ENCODE measurements at regions of chr17 and their contacts with region 1.

Region 1: DNA sequence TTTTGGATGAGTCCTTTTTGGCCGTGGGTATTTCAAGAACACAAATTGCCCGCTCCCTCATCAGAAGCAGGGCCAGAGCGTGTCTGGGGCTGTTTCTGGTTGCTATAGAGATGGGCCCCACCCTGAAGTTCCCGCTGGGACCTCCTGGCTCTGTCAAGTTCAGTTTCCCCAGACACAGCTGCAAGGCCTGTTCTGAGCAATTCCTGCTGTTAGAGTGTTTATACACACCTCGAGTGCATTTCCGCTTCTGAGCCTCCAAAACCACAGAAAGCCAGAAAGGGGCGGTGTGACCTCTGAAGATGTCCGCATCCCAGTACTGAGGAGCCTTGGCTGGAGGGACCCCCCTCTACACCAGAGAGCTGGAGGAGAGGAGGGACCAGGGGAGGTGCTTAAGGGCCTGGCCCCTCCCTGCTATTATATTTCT is 9.3 kb upstream of the WBP2 start:
- DNase-seq: peak; percentile 77
- ATAC-seq: peak; percentile 90
- H3K4me3 ChIP-seq: peak overlapping the region; percentile 22; the same call in 1 of the 2 replicates
- H3K27ac ChIP-seq: peak overlapping the region; percentile 29
- H3K4me1 ChIP-seq: peaks cover 22% of the 10 kb centered on the region
- H3K27me3 ChIP-seq: no peaks in the 10 kb centered on the region
- CTCF ChIP-seq: no peak
- EP300 ChIP-seq: peak in 1 of 2 experiments; percentile 38; a peak in 1 of 4 replicates
- POLR2A ChIP-seq: no peak
- RAD21 ChIP-seq: no peak

Region 2: DNA sequence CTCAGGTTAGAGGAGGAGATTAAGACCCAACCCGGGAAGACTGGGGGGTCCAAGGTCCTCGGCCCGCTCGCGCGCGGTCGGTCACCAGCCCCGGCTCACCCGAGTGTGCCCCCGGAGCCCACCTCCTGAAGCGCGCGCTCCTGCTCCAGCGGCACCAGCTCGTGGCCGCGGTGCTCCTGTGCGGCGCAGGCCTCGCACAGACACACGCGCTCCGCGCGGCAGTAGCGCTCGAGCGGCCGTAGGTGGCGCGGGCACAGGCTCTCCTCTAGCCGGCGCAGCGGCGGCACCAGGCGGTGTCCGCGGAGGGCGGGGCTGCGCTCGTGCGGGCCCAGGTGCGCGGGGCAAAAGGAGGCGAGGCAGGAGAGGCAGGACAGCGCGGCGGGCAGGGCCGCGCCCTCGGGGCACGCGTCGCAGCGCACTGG is 13.3 kb after region 1 on chr17:
- CTCF ChIA-PET with region 1: interaction called, 81 read pairs
- POLR2A ChIA-PET with region 1: interaction called, 27 read pairs
- RAD21 ChIA-PET with region 1: interaction called, 16 read pairs
- SMC1A ChIA-PET with region 1: interaction called, 8 read pairs
- in situ Hi-C with region 1: no loop called
- intact Hi-C with region 1: no loop called
- DNase-seq: no peak
- ATAC-seq: peak; percentile 83
- H3K4me3 ChIP-seq: peak overlapping the region; percentile 29; the same call in 1 of the 2 replicates
- H3K27ac ChIP-seq: no peak overlapping the region
- H3K4me1 ChIP-seq: peaks cover 25% of the 10 kb centered on the region
- H3K27me3 ChIP-seq: peaks cover 2% of the 10 kb centered on the region in 2 experiments
- CTCF ChIP-seq: peak; percentile 40 to 50 (median 45); a peak in 5 of 6 replicates
- EP300 ChIP-seq: no peak
- POLR2A ChIP-seq: no peak
- RAD21 ChIP-seq: no peak